WTC11 (cell line): ENCODE measurements at regions of chr1 and their contacts with region 1.

Region 1: GRCh38 chr1:153967082-153968000 is at the start of gene CREB3L4:
- DNase-seq: peak; percentile 92
- ATAC-seq: peak; percentile 79
- H3K4me3 Mint-ChIP-seq: peak within 1 kb of the TSS; percentile 80
- H3K27ac Mint-ChIP-seq: peak within 1 kb of the TSS; percentile 98
- H3K4me1 Mint-ChIP-seq: peaks cover 31% of the 10 kb centered on the region
- H3K27me3 Mint-ChIP-seq: no peaks in the 10 kb centered on the region
- CTCF ChIP-seq: no peak
- total RNA-seq, gene CREB3L4: 33.1 to 35.2 TPM (median 34.6 TPM) in 3 replicates

Region 2: GRCh38 chr1:153977250-153978240 is 10.2 kb after region 1 on chr1 and contains the start of gene JTB:
- CTCF ChIA-PET with region 1: interaction called, 26 read pairs
- POLR2A ChIA-PET with region 1: interaction called, 55 read pairs
- DNase-seq: peak; percentile 88
- ATAC-seq: peak; percentile 87
- H3K4me3 Mint-ChIP-seq: peak within 1 kb of the TSS; percentile 98
- H3K27ac Mint-ChIP-seq: peak within 1 kb of the TSS; percentile 97
- H3K4me1 Mint-ChIP-seq: peaks cover 31% of the 10 kb centered on the region
- H3K27me3 Mint-ChIP-seq: no peaks in the 10 kb centered on the region
- CTCF ChIP-seq: no peak
- total RNA-seq, gene JTB: 88.8 to 90.6 TPM (median 90.3 TPM) in 3 replicates

Region 3: GRCh38 chr1:154014154-154014910 is 47.0 kb after region 1 on chr1:
- CTCF ChIA-PET with region 1: no interaction called
- POLR2A ChIA-PET with region 1: no interaction called
- DNase-seq: no peak
- ATAC-seq: no peak
- H3K4me3 Mint-ChIP-seq: no peak overlapping the region
- H3K27ac Mint-ChIP-seq: no peak overlapping the region
- H3K4me1 Mint-ChIP-seq: no peaks in the 10 kb centered on the region
- H3K27me3 Mint-ChIP-seq: no peaks in the 10 kb centered on the region
- CTCF ChIP-seq: no peak